ENCODE measurements at regions of chr5 and their contacts with region 1.

Region 1: DNA sequence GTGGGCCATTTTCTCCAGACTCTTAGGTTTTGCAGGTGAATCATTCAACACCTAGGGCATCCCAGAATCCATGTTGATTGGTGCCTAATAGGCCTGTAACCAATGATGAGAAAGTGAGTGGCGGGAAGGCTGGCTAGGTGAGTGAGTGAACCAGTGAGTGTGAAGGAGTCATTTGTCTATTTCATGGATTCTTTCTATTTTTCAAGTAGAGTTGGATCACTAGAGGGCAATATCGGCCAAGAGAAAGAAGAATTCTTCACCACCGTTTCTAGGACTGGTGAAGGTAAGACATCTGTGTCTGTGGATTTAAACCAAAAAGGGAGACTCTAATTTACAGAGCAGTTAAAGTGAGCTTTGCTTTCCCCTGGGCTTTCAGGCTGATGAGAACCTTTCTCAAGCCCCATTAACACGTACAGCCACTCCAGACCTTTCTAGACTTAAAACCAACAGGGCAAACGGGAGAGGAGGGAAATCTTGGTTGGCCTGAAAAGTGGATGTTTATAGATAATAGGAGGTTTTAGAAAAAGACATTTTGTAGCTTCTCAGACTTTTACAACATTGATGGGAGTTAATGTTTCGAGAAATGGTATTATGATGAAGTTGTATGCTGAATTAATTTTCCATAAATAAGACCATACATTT is 114.3 kb upstream of the IL12B start:
- DNase-seq: peak; percentile 77 to 78
- ATAC-seq: peak; percentile 76 to 86
- H3K4me3 ChIP-seq: no peak overlapping the region
- H3K27ac ChIP-seq: peak overlapping the region; percentile 62 to 66
- H3K4me1 ChIP-seq: peaks cover 28% of the 10 kb centered on the region
- CTCF ChIP-seq: peak; percentile 85
- EP300 ChIP-seq: no peak
- POLR2A ChIP-seq: no peak
- RAD21 ChIP-seq: peak; percentile 96 to 98

Region 2: GRCh38 chr5:159420940-159421339 is 23.6 kb before region 1 on chr5:
- CTCF ChIA-PET with region 1: interaction called, 12 read pairs
- POLR2A ChIA-PET with region 1: no interaction called
- DNase-seq: no peak
- ATAC-seq: no peak
- H3K4me3 ChIP-seq: no peak overlapping the region
- H3K27ac ChIP-seq: no peak overlapping the region
- H3K4me1 ChIP-seq: no peaks in the 10 kb centered on the region
- CTCF ChIP-seq: no peak
- EP300 ChIP-seq: no peak
- POLR2A ChIP-seq: no peak
- RAD21 ChIP-seq: no peak

Region 3: GRCh38 chr5:159456722-159457465 is 12.3 kb after region 1 on chr5:
- CTCF ChIA-PET with region 1: interaction called, 70 read pairs
- POLR2A ChIA-PET with region 1: no interaction called
- DNase-seq: peak; percentile 35 to 60
- ATAC-seq: peak; percentile 63 to 75; a peak in 5 of 6 replicates
- H3K4me3 ChIP-seq: no peak overlapping the region
- H3K27ac ChIP-seq: 0 out of 6 replicates have a peak overlapping the region, but pooled peaks of 1 of the 2 experiments have one; percentile 5
- H3K4me1 ChIP-seq: peaks cover 36% of the 10 kb centered on the region
- CTCF ChIP-seq: no peak
- EP300 ChIP-seq: no peak
- POLR2A ChIP-seq: no peak
- RAD21 ChIP-seq: no peak

Region 4: GRCh38 chr5:159588930-159589329 is 144.4 kb after region 1 on chr5:
- CTCF ChIA-PET with region 1: interaction called, 11 read pairs
- POLR2A ChIA-PET with region 1: no interaction called
- DNase-seq: no peak
- ATAC-seq: no peak
- H3K4me3 ChIP-seq: no peak overlapping the region
- H3K27ac ChIP-seq: no peak overlapping the region
- H3K4me1 ChIP-seq: peaks cover 25% of the 10 kb centered on the region
- CTCF ChIP-seq: no peak
- EP300 ChIP-seq: no peak
- POLR2A ChIP-seq: no peak
- RAD21 ChIP-seq: no peak

Region 5: DNA sequence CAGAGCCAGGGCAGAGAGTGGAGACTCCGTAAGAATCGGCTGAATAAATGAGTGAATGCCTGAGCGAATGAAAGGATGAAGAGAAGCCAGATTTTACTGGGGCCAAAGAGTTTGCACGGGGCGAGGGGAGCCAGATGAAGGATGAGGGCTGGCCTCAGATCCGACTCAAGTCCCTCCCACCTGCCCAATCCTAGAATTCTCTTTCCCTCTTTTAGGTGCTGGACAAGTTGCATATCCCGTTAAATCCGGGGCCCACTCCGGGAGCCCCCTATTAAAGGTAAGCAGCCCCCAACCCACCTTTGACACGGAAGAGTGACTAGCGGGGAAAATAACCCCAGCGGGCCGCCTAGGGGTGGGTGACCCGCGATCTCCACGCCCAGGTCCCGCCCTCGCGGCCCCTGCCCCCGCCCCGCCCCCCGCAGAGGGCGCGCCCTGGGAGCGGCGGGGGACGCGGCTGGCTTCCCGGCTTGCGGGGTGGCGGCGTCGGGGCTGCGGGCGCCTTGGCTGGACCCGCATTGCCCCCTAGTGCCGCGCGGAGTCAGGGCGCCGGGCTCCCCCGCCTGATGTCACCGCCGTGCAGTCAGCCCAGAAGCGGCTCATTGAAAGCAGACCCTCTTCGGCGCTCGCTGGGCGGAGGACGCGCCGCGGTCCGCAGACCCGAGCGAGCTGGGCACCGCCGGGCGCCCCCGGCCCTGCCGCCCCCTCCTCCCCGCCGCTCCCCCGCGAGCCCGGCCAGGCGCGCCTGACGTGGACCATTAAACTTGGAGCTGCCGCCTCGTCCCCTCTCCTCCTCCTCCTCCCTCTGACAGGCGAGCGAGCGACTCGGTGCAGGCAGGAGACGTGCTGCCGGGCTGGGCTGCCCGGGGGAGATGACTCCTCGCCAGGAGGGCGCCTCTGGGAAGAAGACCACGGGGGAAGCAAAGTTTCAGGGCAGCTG is 471.6 kb after region 1 on chr5 and contains the start of gene ADRA1B:
- CTCF ChIA-PET with region 1: interaction called, 220 read pairs
- POLR2A ChIA-PET with region 1: no interaction called
- DNase-seq: peak; percentile 76 to 86
- ATAC-seq: peak; percentile 70 to 73
- H3K4me3 ChIP-seq: peak within 1 kb of the TSS; percentile 63
- H3K27ac ChIP-seq: peak within 1 kb of the TSS; percentile 89 to 96
- H3K4me1 ChIP-seq: peaks cover 84% of the 10 kb centered on the region
- CTCF ChIP-seq: peak; percentile 84
- EP300 ChIP-seq: peak; percentile 18 to 21; a peak in 1 of 5 replicates
- POLR2A ChIP-seq: no peak
- RAD21 ChIP-seq: peak; percentile 79 to 99
- polyA plus RNA-seq, gene ADRA1B: 4.4 and 5.1 TPM in 2 replicates

Region 6: GRCh38 chr5:160119142-160119904 is 674.8 kb after region 1 on chr5 and contains the start of gene PWWP2A:
- CTCF ChIA-PET with region 1: no interaction called
- POLR2A ChIA-PET with region 1: no interaction called
- DNase-seq: peak; percentile 99 to 100
- ATAC-seq: peak; percentile 93 to 97
- H3K4me3 ChIP-seq: peak within 1 kb of the TSS; percentile 85
- H3K27ac ChIP-seq: peak within 1 kb of the TSS; percentile 92 to 97
- H3K4me1 ChIP-seq: peaks cover 12% of the 10 kb centered on the region; the same call in 2 of the 3 replicates
- CTCF ChIP-seq: no peak; the same call in 2 of the 3 replicates
- EP300 ChIP-seq: no peak
- POLR2A ChIP-seq: peak; percentile 87
- RAD21 ChIP-seq: no peak
- polyA plus RNA-seq, gene PWWP2A: 10.9 and 15.2 TPM in 2 replicates

Measured in A549 (cell line).